Endothelial cell of umbilical vein (primary cell): ENCODE measurements at regions of chr16 and their contacts with region 1.

Region 1: DNA sequence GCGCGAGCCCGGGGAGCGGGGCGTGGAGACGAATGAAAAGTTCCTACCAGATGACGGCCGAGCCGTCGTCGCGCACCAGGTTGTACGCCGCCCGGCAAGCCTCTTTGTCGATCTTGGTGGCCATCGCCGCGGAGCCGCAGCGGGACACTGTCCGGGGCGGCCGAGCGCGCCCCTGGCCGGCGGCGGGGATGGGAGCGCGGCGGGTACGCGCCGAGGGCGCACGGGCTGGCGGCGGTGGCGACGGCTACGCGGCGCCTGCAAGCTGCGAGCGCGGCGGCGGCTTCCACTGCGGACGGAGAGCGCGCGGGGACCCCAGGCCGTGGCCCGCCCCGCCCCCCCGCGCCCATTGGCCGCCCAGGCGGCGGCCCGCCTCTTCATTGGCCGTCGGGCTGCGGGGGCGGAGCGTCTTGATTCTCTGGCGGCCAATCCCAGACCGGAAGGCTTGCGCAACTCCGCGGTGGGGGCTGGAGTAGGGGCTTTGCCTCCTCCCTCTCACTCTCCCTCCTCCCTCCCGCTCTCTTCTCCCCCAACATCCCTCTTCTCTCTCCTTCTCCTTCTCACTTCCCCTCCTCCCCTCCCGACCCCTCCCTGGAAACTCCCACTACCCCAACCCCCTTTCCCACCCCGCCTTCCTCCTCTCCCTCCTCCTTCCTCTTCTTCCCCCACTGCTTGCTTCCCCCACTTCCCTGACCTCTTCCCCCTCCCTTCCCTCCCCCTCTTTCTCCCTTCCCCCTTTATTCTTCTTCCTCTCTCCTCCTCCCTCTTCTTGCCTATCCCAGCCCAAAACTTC is at the start of gene COTL1:
- DNase-seq: peak; percentile 93
- H3K4me3 ChIP-seq: peak within 1 kb of the TSS; percentile 81 to 94 (median 84)
- H3K27ac ChIP-seq: peak within 1 kb of the TSS; percentile 57
- H3K4me1 ChIP-seq: peaks cover 31% of the 10 kb centered on the region
- H3K27me3 ChIP-seq: no peaks in the 10 kb centered on the region
- CTCF ChIP-seq: no peak
- POLR2A ChIP-seq: peak; percentile 93
- total RNA-seq, gene COTL1: 132 and 200 TPM in 2 replicates

Region 2: GRCh38 chr16:84277237-84277823 is 340.7 kb before region 1 on chr16:
- CTCF ChIA-PET with region 1: interaction called, 5 read pairs
- POLR2A ChIA-PET with region 1: no interaction called
- dilution Hi-C with region 1: no loop called
- intact Hi-C with region 1: loop called (anchors 5 kb)
- DNase-seq: peak; percentile 54
- H3K4me3 ChIP-seq: no peak overlapping the region
- H3K27ac ChIP-seq: no peak overlapping the region
- H3K4me1 ChIP-seq: no peaks in the 10 kb centered on the region
- H3K27me3 ChIP-seq: peaks cover 0 to 4% of the 10 kb centered on the region in 2 experiments
- CTCF ChIP-seq: peak; percentile 77
- POLR2A ChIP-seq: no peak

Region 3: DNA sequence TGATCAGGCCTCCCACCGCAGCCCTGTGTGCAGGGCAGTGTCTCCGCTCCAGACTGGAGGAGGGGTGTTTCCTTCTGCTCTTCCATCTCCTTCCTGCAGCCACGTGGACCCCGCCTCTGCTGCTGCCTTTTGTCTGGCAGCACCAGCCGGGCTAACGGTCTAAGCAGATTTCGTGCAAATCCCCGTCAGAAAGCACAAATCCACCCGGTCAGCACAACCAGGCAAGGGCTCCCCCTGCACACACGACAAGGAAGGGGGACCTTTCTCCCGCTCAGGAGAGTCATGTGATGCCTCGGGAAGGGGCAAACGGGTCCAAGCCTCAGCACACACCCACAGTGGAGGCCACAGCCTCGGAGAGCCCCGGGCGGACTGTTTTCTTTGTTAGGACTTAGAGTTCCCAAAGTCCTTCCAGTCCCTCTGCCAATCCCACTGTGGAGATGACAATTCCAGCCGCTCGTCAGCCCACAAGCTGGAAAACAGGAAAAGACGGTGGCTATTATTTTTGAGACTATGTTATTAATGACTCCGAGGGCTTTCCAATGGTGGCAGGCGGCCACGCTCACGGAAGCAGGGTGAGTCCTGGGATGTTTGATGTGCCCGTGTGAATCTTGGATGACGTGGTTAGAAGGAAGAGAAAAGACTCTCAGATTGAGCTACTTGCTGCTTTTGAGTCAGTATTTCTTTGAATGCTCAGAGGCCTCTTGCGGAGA is 91.0 kb before region 1 on chr16:
- CTCF ChIA-PET with region 1: interaction called, 11 read pairs
- POLR2A ChIA-PET with region 1: interaction called, 14 read pairs
- dilution Hi-C with region 1: loop called (anchors 25 kb)
- intact Hi-C with region 1: loop called (anchors 1 kb)
- DNase-seq: peak; percentile 76
- H3K4me3 ChIP-seq: no peak overlapping the region
- H3K27ac ChIP-seq: peak overlapping the region; percentile 68
- H3K4me1 ChIP-seq: peaks cover 23% of the 10 kb centered on the region
- H3K27me3 ChIP-seq: no peaks in the 10 kb centered on the region
- CTCF ChIP-seq: no peak
- POLR2A ChIP-seq: peak; percentile 54

Region 4: DNA sequence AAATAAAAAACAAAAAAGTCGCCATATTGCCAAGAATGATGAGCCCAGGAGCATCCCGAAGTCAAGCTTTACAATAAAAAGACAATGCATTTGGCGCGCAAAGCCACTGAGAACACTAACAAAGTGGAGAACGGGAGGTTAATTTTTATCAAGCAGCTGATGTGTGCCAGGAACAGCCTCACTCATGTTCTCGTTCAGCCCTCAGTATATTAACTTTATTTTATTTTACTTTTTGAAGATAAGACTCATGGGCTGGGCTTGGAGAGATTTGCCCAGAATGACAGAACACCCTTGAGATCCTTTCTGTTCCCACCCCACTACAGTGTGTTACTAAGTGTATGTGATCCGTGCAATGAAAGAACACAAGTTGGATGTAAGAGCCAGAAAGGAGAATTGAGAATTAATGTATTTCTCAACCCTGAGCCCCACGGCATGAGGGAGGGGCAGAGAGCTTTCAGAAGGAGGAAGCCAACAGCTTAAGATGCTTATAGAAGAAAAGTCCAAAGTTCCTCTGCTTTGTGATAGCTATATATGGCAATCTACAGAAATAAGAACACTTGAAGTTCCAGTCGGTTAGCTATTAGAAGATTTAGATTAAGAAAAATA is 48.5 kb before region 1 on chr16:
- CTCF ChIA-PET with region 1: no interaction called
- POLR2A ChIA-PET with region 1: no interaction called
- dilution Hi-C with region 1: no loop called
- intact Hi-C with region 1: no loop called
- DNase-seq: no peak
- H3K4me3 ChIP-seq: no peak overlapping the region
- H3K27ac ChIP-seq: no peak overlapping the region
- H3K4me1 ChIP-seq: no peaks in the 10 kb centered on the region
- H3K27me3 ChIP-seq: no peaks in the 10 kb centered on the region
- CTCF ChIP-seq: no peak
- POLR2A ChIP-seq: no peak

Region 5: DNA sequence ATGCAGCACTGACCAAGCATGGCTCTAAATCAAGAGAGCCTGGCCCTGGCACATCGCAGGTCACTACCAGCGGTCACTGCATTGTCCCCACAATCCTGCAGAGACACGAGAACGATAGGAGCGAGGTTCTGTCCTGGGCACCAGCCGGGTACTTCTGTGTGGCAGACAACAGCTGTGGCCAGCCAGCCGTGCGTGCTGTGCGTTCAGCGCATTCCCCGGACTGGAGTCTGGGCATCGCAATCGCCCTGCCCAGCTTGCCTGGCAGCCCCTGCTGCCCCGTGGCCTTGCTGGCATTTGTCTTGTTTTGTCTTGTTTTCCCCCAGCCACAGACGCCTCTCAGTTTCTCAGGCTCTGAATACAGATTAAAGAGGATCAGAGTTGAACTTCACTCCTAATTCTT is 34.0 kb before region 1 on chr16:
- CTCF ChIA-PET with region 1: no interaction called
- POLR2A ChIA-PET with region 1: no interaction called
- dilution Hi-C with region 1: no loop called
- intact Hi-C with region 1: no loop called
- DNase-seq: no peak
- H3K4me3 ChIP-seq: no peak overlapping the region
- H3K27ac ChIP-seq: no peak overlapping the region
- H3K4me1 ChIP-seq: no peaks in the 10 kb centered on the region
- H3K27me3 ChIP-seq: no peaks in the 10 kb centered on the region
- CTCF ChIP-seq: no peak
- POLR2A ChIP-seq: no peak

Region 6: GRCh38 chr16:84599521-84600202 is 18.3 kb before region 1 on chr16:
- CTCF ChIA-PET with region 1: interaction called, 10 read pairs
- POLR2A ChIA-PET with region 1: no interaction called
- dilution Hi-C with region 1: no loop called
- intact Hi-C with region 1: loop called (anchors 1 kb)
- DNase-seq: peak; percentile 91
- H3K4me3 ChIP-seq: peak overlapping the region in 1 of 3 experiments; percentile 43
- H3K27ac ChIP-seq: peak overlapping the region; percentile 82
- H3K4me1 ChIP-seq: peaks cover 62% of the 10 kb centered on the region
- H3K27me3 ChIP-seq: no peaks in the 10 kb centered on the region
- CTCF ChIP-seq: no peak
- POLR2A ChIP-seq: peak; percentile 51

Region 7: DNA sequence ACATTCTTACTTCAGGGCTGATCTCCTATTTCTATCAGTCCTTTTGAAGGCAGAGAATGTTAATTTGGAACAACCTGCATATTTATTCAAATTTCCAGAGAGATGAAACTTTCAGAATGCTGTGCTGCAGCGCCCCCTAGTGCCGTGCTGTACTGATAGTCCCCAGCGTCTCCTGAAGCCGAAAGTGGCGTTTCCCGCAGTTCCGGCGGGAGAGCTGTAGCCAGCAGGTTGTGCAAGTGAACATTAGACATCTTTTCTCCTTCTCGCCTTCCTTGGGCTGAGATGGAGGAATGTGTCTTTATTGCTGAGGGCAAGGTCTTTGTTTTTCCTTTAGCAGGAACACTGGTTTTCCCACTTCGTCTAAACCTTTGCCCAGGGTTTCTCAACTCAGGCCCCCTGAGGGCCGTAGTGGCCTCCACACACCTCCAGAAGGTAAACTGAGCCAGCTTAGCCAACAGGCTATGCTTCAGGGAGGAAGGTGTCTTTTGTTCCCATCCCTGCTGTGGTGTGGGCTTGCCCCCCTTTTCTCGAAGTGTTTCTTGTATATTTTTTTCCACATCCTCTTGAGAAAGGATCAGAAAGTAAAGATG is 108.2 kb after region 1 on chr16:
- CTCF ChIA-PET with region 1: interaction called, 73 read pairs
- POLR2A ChIA-PET with region 1: interaction called, 4 read pairs
- dilution Hi-C with region 1: no loop called
- intact Hi-C with region 1: loop called (anchors 1 kb)
- DNase-seq: peak; percentile 82
- H3K4me3 ChIP-seq: no peak overlapping the region
- H3K27ac ChIP-seq: no peak overlapping the region
- H3K4me1 ChIP-seq: peaks cover 62% of the 10 kb centered on the region
- H3K27me3 ChIP-seq: no peaks in the 10 kb centered on the region
- CTCF ChIP-seq: peak; percentile 88 to 95
- POLR2A ChIP-seq: no peak

Region 8: DNA sequence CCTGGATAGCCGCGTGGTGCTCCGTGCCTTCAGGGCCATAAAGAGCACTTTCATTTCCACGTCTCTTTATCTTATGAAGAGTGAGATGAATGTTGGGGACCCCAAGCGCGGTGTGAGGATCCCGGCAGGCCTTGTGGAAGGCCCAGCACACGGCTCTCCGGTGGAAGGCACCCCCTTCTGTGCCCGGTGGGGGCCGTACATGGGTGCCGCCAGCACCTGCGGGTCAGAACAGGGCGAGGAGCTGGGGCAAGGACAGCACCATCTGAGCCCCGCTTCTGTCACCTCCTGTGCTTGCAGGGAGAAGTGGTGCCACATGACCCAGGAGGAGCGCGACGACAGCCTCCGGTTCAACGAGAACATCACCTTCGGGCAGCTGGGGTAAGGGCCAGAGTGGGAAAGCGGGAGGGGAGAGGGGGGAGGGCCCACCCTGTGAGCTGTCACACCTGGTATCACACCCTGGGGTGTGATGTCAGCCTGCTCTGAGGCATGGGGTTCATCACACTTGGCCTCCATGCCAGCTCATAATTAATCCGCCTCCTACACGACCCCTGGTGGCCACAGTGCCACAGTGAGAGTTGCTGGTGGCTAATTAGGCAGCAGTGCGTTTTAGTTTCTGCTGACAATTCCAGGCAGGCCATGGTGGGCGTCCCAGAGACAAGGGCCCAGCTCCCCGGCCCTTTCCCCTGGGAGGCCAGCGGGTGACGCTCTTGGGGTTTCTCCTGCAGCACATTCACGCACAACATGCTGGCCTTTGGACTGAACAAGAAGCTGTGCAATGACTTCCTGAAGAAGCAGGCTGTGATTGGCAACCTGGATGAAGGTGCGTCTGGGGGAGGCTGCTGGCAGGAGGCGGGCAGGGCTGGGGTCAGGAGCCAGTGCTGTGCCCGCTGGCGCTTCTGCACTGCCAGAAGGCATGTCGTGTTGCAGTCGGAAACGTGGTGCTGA is 468.6 kb after region 1 on chr16:
- CTCF ChIA-PET with region 1: interaction called, 13 read pairs
- POLR2A ChIA-PET with region 1: no interaction called
- dilution Hi-C with region 1: no loop called
- intact Hi-C with region 1: no loop called
- DNase-seq: peak; percentile 63
- H3K4me3 ChIP-seq: no peak overlapping the region
- H3K27ac ChIP-seq: no peak overlapping the region
- H3K4me1 ChIP-seq: no peaks in the 10 kb centered on the region
- H3K27me3 ChIP-seq: peaks cover 3 to 7% of the 10 kb centered on the region in 2 experiments
- CTCF ChIP-seq: peak; percentile 77 to 81
- POLR2A ChIP-seq: no peak